Calu3 (cell line): ENCODE measurements at regions of chr5 and their contacts with region 1.

Region 1: DNA sequence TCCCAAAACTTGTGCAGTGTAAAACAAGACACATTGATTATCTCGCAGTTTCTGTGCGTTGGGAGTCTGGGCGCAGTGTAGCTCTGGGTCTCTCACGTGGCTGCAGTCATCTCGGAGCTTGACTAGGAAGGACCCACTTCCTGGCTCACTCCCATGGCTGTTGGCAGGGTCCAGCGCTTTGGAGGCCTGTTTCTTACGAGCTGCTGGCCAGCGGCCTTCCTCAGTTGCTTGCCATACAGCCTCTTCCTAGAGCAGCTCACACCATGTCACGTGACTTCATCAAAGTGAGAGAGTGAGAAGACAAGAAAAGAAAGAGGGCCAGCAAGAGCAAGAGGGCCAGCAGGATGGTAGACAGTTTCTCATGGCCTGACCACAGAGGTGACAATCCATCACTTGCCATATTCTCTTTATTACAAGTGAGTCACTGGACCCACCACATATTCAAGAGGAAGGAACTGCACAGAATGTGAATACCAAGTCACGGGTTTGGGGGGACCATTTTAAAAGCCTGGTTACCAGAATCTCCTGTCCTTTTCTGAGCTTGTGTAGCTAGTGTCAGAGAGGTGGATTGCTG is 36.2 kb downstream of the MCCC2 start:
- DNase-seq: no peak
- H3K4me3 Mint-ChIP-seq: no peak overlapping the region
- H3K27ac Mint-ChIP-seq: no peak overlapping the region
- H3K4me1 Mint-ChIP-seq: peaks cover 9% of the 10 kb centered on the region
- H3K27me3 Mint-ChIP-seq: no peaks in the 10 kb centered on the region
- CTCF ChIP-seq: no peak

Region 2: DNA sequence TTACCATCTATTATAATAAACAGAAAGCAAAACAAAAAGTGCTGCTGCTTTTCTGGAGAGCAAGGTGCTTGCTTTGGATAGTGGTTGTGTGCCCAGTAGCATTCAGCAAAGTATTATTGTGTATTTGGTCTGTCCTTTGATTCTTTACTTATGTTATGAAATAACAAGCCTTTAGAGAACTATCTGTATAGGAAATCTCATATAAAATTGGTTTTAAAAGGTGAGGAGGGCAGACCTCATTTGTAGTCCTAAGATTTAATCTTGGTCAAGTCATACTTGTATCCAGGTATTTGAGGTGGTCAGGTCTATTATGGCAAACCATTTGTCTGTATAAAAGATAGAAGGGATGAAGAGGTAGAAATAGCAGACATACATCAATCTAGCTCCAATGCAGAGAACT is 114.6 kb before region 1 on chr5:
- CTCF ChIA-PET with region 1: no interaction called
- intact Hi-C with region 1: loop called (anchors 10 kb)
- DNase-seq: no peak
- H3K4me3 Mint-ChIP-seq: no peak overlapping the region
- H3K27ac Mint-ChIP-seq: no peak overlapping the region
- H3K4me1 Mint-ChIP-seq: no peaks in the 10 kb centered on the region
- H3K27me3 Mint-ChIP-seq: no peaks in the 10 kb centered on the region
- CTCF ChIP-seq: no peak

Region 3: DNA sequence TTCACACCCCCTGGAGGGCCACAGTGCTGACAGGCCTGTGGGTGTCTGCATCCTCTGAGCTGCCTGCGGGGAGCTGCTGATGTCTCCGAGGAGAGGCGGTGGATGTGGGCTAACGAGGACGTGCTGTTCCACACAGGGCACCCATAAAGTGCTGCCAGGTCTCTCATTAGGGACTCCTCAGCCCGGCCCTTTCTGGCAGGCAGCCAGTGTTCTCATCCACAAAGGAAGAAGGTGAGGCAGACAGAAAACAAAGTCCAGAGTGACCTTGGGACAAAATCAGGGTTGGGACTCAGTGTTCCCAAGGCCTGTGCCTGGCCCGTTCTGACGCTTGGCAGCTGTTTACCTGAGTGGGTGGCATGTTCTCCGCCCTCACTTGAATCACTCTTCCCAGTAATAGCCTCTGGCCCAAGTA is 125.1 kb after region 1 on chr5:
- CTCF ChIA-PET with region 1: no interaction called
- intact Hi-C with region 1: no loop called
- DNase-seq: peak; percentile 51
- H3K4me3 Mint-ChIP-seq: no peak overlapping the region
- H3K27ac Mint-ChIP-seq: no peak overlapping the region
- H3K4me1 Mint-ChIP-seq: peaks cover 80% of the 10 kb centered on the region
- H3K27me3 Mint-ChIP-seq: no peaks in the 10 kb centered on the region
- CTCF ChIP-seq: no peak